HCT116 (cell line): ENCODE measurements at regions of chr7 and their contacts with region 1.

Region 1: DNA sequence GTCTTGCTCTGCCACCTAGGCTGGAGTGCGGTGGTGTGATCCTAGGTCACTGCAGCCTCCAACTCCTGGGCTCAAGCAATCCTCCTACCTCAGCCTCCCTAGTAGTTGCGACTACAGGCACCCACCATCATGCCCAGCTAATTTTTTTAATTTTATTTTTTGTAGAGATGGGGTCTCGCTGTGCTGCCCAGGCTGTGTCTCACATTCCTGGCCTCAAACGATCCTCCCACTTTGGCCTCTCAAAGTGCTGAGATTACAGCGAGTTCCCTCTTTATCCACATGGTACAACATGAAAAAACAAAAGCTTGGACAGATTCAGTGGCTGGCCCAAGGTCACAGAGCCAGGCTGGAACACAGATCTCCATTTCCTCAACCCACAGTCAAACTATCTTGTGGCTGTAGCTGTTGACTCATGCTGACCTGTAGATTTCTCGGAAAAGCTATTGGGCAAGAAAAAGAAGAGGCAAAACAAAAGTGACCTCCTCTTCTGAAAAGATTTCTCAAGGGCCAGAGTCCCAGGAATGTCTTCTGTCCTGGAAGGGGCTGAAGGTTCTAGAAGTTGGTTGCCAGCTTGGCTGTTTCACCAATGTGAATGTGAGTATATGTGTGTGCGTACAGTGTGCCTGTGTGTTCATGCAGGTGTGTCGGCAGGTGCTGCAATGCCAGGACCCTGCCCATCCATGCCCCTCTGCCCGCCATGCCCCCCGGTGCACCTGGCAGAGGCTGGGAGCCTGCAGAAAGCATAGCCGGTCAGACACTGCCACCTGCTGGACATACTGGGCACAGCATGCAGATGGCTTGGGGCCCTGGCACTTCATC is 28.4 kb downstream of the TMEM130 start:
- DNase-seq: no peak
- ATAC-seq: peak; percentile 83
- H3K4me3 ChIP-seq: no peak overlapping the region
- H3K27ac ChIP-seq: no peak overlapping the region
- H3K4me1 ChIP-seq: peaks cover 4 to 12% of the 10 kb centered on the region in 2 experiments; a peak in 2 of 4 replicates
- H3K27me3 ChIP-seq: no peaks in the 10 kb centered on the region
- CTCF ChIP-seq: peak; percentile 89 to 98 (median 96)
- POLR2A ChIP-seq: no peak
- RAD21 ChIP-seq: peak; percentile 98

Region 2: GRCh38 chr7:98021588-98022351 is 819.6 kb before region 1 on chr7:
- CTCF ChIA-PET with region 1: interaction called, 3 read pairs
- POLR2A ChIA-PET with region 1: no interaction called
- RAD21 ChIA-PET with region 1: no interaction called
- intact Hi-C with region 1: loop called (anchors 5 kb)
- DNase-seq: peak; percentile 39
- ATAC-seq: peak; percentile 97
- H3K4me3 ChIP-seq: no peak overlapping the region
- H3K27ac ChIP-seq: no peak overlapping the region
- H3K4me1 ChIP-seq: no peaks in the 10 kb centered on the region
- H3K27me3 ChIP-seq: no peaks in the 10 kb centered on the region
- CTCF ChIP-seq: peak; percentile 89 to 94 (median 91)
- POLR2A ChIP-seq: no peak
- RAD21 ChIP-seq: peak; percentile 96

Region 3: GRCh38 chr7:98420966-98421612 is 420.3 kb before region 1 on chr7:
- CTCF ChIA-PET with region 1: interaction called, 10 read pairs
- POLR2A ChIA-PET with region 1: interaction called, 6 read pairs
- RAD21 ChIA-PET with region 1: interaction called in 1 of 2 experiments, 3 read pairs
- intact Hi-C with region 1: no loop called
- DNase-seq: peak; percentile 90
- ATAC-seq: peak; percentile 76
- H3K4me3 ChIP-seq: no peak overlapping the region
- H3K27ac ChIP-seq: no peak overlapping the region
- H3K4me1 ChIP-seq: peaks cover 30 to 57% of the 10 kb centered on the region in 2 experiments
- H3K27me3 ChIP-seq: no peaks in the 10 kb centered on the region
- CTCF ChIP-seq: peak in 2 of 3 experiments; percentile 98 to 100; a peak in 4 of 6 replicates
- POLR2A ChIP-seq: no peak
- RAD21 ChIP-seq: no peak

Region 4: DNA sequence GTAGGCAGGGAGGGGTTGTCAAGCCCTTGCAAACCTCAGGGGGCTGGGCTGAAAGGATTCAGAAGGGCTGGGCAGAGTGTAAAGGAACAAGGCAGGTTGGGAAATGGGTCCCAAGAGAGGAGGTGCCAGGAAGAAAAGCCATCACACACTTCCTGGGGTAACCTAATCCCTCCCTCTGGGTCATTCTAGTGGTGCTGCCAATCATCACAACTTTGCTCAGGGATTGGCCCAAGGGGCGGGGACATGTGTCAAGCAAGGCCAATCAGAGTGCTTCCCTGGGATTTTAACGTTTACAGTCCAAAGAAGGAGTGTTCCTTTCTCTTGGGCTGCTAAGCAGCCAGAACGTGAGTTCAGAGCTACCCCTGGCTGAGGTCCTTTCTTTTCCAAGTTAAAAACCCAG is 281.4 kb before region 1 on chr7:
- CTCF ChIA-PET with region 1: no interaction called
- POLR2A ChIA-PET with region 1: no interaction called
- RAD21 ChIA-PET with region 1: interaction called in 1 of 2 experiments, 4 read pairs
- intact Hi-C with region 1: loop called (anchors 10 kb)
- DNase-seq: no peak
- ATAC-seq: peak; percentile 78
- H3K4me3 ChIP-seq: no peak overlapping the region
- H3K27ac ChIP-seq: no peak overlapping the region
- H3K4me1 ChIP-seq: peaks cover 21 to 47% of the 10 kb centered on the region in 2 experiments
- H3K27me3 ChIP-seq: no peaks in the 10 kb centered on the region
- CTCF ChIP-seq: no peak
- POLR2A ChIP-seq: no peak
- RAD21 ChIP-seq: no peak

Region 5: GRCh38 chr7:98755128-98755898 is 86.1 kb before region 1 on chr7:
- CTCF ChIA-PET with region 1: no interaction called
- POLR2A ChIA-PET with region 1: no interaction called
- RAD21 ChIA-PET with region 1: no interaction called
- intact Hi-C with region 1: loop called (anchors 1 kb)
- DNase-seq: no peak
- ATAC-seq: peak; percentile 66; the same call in 1 of the 2 replicates
- H3K4me3 ChIP-seq: no peak overlapping the region
- H3K27ac ChIP-seq: no peak overlapping the region
- H3K4me1 ChIP-seq: no peaks in the 10 kb centered on the region
- H3K27me3 ChIP-seq: no peaks in the 10 kb centered on the region
- CTCF ChIP-seq: peak in 2 of 3 experiments; percentile 21 to 67; a peak in 1 of 6 replicates
- POLR2A ChIP-seq: no peak
- RAD21 ChIP-seq: peak; percentile 82